Gastrocnemius medialis (tissue), 4 donors: ENCODE measurements at regions of chr6 and their contacts with region 1.

Region 1: GRCh38 chr6:133241086-133241900 is at the start of gene EYA4:
- DNase-seq: peak; percentile 61 to 76
- ATAC-seq: peak; percentile 51 to 55
- H3K4me3 ChIP-seq: peak within 1 kb of the TSS; percentile 76 to 94 (median 80)
- H3K27ac ChIP-seq: peak within 1 kb of the TSS; percentile 95 to 99 (median 96)
- H3K4me1 ChIP-seq: peaks cover 19 to 28% of the 10 kb centered on the region in 2 donors
- H3K27me3 ChIP-seq: no peaks in the 10 kb centered on the region
- CTCF ChIP-seq: no peak
- POLR2A ChIP-seq: peak; percentile 66 to 82
- total RNA-seq, gene EYA4: 33.7 to 110 (median 62.1) TPM

Region 2: GRCh38 chr6:132962936-132963868 is 278.1 kb before region 1 on chr6:
- in situ Hi-C with region 1: no loop called
- intact Hi-C with region 1: loop called (anchors 5 kb)
- DNase-seq: peak; percentile 50 to 68
- ATAC-seq: peak; percentile 63 to 87
- H3K4me3 ChIP-seq: no peak overlapping the region
- H3K27ac ChIP-seq: no peak overlapping the region
- H3K4me1 ChIP-seq: peaks cover 19 to 23% of the 10 kb centered on the region in 2 donors
- H3K27me3 ChIP-seq: no peaks in the 10 kb centered on the region
- CTCF ChIP-seq: peak; percentile 57 to 76 (median 70)
- POLR2A ChIP-seq: no peak

Region 3: GRCh38 chr6:133130863-133131262 is 110.4 kb before region 1 on chr6:
- in situ Hi-C with region 1: no loop called
- intact Hi-C with region 1: loop called (anchors 2 kb)
- DNase-seq: peak; percentile 91
- ATAC-seq: peak; percentile 84 to 91
- H3K4me3 ChIP-seq: no peak overlapping the region
- H3K27ac ChIP-seq: peak overlapping the region; percentile 73 to 85 (median 80)
- H3K4me1 ChIP-seq: peaks cover 32 to 38% of the 10 kb centered on the region in 2 donors
- H3K27me3 ChIP-seq: no peaks in the 10 kb centered on the region
- CTCF ChIP-seq: peak in 2 of 5 experiments; percentile 24 to 26
- POLR2A ChIP-seq: no peak

Region 4: DNA sequence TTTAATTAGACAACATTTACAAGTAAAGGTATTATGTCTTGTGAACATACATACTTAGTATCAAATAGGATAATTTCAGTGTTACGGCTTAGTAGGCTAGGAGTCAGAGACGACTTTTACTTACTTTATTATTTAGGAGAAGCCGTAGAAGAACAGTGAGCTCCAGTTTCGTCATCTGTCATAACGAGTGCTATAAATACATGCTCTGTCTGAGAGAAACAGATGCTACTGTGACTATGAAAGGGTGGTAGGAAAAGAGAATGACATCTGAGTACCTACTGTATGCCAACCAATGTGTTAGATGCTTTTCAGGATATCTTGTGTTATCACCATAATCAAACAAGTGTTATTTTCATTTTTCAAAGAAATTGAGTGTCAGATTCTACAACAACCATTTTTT is 118.9 kb after region 1 on chr6:
- in situ Hi-C with region 1: loop called in 1 of 4 experiments (anchors 10 kb)
- intact Hi-C with region 1: no loop called
- DNase-seq: no peak
- ATAC-seq: peak; percentile 88 to 91
- H3K4me3 ChIP-seq: peak overlapping the region; percentile 8 to 42 (median 28)
- H3K27ac ChIP-seq: peak overlapping the region; percentile 82 to 90 (median 90)
- H3K4me1 ChIP-seq: peaks cover 55 to 61% of the 10 kb centered on the region in 2 donors
- H3K27me3 ChIP-seq: no peaks in the 10 kb centered on the region
- CTCF ChIP-seq: no peak
- POLR2A ChIP-seq: no peak

Region 5: DNA sequence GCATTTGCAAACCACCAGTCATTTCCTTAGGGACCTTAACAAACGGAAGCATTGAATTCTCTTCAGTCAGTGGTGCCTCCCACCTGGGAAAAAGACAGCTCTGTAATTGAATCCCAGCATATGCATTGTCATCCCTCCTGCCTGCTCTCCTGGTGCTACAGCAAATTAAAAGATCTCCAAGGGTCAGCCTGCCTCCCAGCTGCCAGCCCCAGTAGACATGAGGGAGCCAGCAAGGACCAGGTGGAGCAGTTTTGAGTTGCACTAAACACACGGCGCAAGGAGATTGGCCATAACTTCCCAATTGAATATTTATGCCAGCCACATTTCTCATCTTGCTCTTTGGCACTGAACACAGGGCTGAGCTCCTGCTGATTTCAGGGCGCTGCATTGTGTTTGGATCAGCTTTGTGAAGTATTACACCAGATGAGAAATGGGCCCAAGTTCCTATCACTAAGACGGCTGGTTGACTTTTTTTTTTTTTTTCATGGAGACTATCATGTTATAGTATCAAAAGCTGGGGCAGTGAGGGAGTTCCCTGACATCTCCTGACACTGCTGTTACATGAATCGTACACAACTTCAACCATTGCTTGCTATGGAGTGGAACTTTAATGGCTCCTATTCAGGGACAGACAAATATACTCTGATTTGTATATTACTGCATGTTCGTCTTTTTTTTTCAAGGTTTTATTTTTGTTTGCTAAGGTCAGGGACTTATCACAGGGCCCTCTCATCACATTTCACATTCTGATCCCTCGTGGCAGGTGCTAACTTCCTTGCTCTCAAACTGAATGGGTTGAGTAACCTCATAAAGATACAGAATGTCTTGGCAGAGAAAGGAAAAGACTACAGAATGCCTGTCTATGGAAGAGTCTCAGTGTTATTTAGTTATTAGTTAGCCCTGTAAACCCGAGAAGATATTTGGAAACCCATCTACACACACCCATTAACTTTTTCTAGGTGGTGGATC is 191.0 kb after region 1 on chr6:
- in situ Hi-C with region 1: loop called in 1 of 4 experiments (anchors 10 kb)
- intact Hi-C with region 1: loop called (anchors 1 kb)
- DNase-seq: peak; percentile 81 to 94
- ATAC-seq: peak; percentile 76 to 82
- H3K4me3 ChIP-seq: peak overlapping the region; percentile 5 to 23 (median 20)
- H3K27ac ChIP-seq: peak overlapping the region; percentile 85 to 89 (median 87)
- H3K4me1 ChIP-seq: peaks cover 52 to 65% of the 10 kb centered on the region in 2 donors
- H3K27me3 ChIP-seq: no peaks in the 10 kb centered on the region
- CTCF ChIP-seq: peak in 1 of 5 experiments; percentile 12
- POLR2A ChIP-seq: no peak

Region 6: GRCh38 chr6:133553652-133554051 is 312.4 kb after region 1 on chr6:
- in situ Hi-C with region 1: no loop called
- intact Hi-C with region 1: loop called (anchors 5 kb)
- DNase-seq: peak; percentile 17 to 31
- ATAC-seq: peak in 1 of 2 donors; percentile 26
- H3K4me3 ChIP-seq: no peak overlapping the region
- H3K27ac ChIP-seq: peak overlapping the region in 1 of 4 donors; percentile 79
- H3K4me1 ChIP-seq: peaks cover 33 to 41% of the 10 kb centered on the region in 2 donors
- H3K27me3 ChIP-seq: no peaks in the 10 kb centered on the region
- CTCF ChIP-seq: peak; percentile 48 to 74 (median 62)
- POLR2A ChIP-seq: no peak